ENCODE measurements at regions of chr2 and their contacts with region 1.

Region 1: DNA sequence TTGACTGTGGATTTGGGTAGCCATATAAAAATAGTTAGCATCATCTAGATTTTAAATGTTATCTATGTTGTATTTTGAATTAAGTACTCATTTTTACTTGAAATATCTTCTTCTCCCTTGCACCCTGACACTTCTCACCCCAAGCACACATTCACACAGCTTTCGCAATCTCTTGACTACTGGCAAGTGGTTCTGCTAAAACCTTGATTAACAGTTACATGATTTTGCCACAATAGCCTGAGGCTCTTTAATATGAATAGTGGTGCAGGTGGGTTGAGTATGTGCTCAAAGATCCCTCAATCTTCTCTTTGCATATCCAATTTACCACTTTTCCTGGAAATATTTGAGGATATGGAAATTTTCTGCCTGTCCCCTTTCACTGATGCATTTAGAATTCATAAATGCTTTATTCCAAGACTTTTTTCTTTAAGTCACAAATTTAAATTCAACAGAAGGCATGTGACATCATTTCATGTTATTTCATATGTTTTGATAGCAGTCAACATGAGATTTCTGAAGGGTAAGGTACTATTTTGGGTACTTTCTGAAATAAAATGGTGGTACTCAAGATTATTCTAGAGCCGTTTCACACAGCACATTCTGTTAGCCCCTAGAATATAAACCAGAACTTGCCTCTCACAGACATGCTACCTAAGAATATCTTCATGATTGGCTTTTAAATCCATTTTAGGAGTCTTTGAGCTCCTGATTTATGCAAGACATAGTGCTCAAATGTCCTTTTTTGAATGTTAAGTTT is 339.8 kb downstream of the RPRM start:
- DNase-seq: no peak
- H3K4me3 Mint-ChIP-seq: no peak overlapping the region
- H3K27ac Mint-ChIP-seq: no peak overlapping the region
- H3K4me1 Mint-ChIP-seq: no peaks in the 10 kb centered on the region
- H3K27me3 Mint-ChIP-seq: no peaks in the 10 kb centered on the region

Region 2: GRCh38 chr2:153163058-153163457 is 24.3 kb after region 1 on chr2:
- intact Hi-C with region 1: no loop called
- DNase-seq: no peak
- H3K4me3 Mint-ChIP-seq: no peak overlapping the region
- H3K27ac Mint-ChIP-seq: no peak overlapping the region
- H3K4me1 Mint-ChIP-seq: no peaks in the 10 kb centered on the region
- H3K27me3 Mint-ChIP-seq: no peaks in the 10 kb centered on the region

Region 3: GRCh38 chr2:153189091-153189888 is 50.5 kb after region 1 on chr2:
- intact Hi-C with region 1: loop called (anchors 1 kb)
- DNase-seq: no peak
- H3K4me3 Mint-ChIP-seq: no peak overlapping the region
- H3K27ac Mint-ChIP-seq: no peak overlapping the region
- H3K4me1 Mint-ChIP-seq: no peaks in the 10 kb centered on the region
- H3K27me3 Mint-ChIP-seq: no peaks in the 10 kb centered on the region